Ascending aorta (tissue), 2 donors: ENCODE measurements at regions of chr17 and their contacts with region 1.

Region 1: GRCh38 chr17:64920026-64920418 is 744 bp upstream of the LRRC37A3 start:
- DNase-seq: peak in 1 of 2 donors; percentile 66
- H3K4me3 ChIP-seq: peak overlapping the region; percentile 72 to 98
- H3K27ac ChIP-seq: peak overlapping the region; percentile 89 to 93
- H3K4me1 ChIP-seq: no peaks in the 10 kb centered on the region
- H3K27me3 ChIP-seq: no peaks in the 10 kb centered on the region
- CTCF ChIP-seq: no peak

Region 2: GRCh38 chr17:64968652-64969501 is 48.9 kb after region 1 on chr17:
- intact Hi-C with region 1: loop called (anchors 2 kb)
- DNase-seq: no peak
- H3K4me3 ChIP-seq: no peak overlapping the region
- H3K27ac ChIP-seq: no peak overlapping the region
- H3K4me1 ChIP-seq: peaks cover 0 to 6% of the 10 kb centered on the region in 2 donors
- H3K27me3 ChIP-seq: no peaks in the 10 kb centered on the region
- CTCF ChIP-seq: no peak

Region 3: DNA sequence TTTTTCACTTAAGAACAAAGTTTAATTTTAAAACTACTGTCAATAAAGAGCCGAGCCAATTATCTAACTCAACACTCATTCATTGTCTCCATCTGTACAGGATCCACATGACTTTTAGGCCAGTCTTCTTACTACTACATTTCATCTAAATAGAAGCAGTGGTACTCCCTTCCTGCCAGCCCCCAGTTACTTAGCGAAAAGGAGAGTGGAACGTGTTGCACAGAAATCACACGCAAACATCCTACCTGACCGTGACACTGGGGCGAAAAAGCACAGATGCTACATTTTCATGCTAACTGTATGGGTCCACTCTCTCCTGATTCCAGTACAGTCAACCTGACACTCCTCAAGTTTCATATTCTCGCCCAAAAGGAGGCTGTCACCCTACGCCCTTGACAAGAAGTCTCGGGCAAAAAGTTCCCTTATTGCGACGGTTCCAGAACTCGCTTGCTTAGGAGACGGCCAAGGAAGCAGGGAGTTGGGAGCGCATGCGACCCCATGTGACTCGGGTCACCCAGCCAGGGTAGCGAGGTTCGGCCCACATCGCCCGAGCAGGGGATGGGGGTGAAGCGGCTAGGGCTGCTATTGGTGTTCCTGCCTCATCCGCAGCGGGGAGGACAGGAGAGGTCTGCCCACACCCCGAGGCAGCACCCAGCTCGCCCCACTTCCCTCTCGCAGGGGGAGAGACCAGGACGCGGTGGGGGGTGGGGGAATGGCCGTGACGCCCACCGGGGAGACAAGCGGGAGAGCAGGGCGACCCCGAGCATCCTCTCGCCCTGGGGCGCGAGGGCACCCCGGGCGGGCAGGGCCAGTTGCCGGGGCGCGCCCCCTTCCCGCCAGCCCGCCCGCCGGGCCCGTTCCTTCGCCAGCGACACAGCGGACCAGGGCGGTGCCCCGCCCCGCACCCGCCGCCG is 135.6 kb after region 1 on chr17:
- intact Hi-C with region 1: loop called (anchors 2 kb)
- DNase-seq: peak; percentile 27 to 80
- H3K4me3 ChIP-seq: peak overlapping the region; percentile 87 to 92
- H3K27ac ChIP-seq: peak overlapping the region; percentile 97 to 98
- H3K4me1 ChIP-seq: peaks cover 0 to 30% of the 10 kb centered on the region in 2 donors
- H3K27me3 ChIP-seq: no peaks in the 10 kb centered on the region
- CTCF ChIP-seq: no peak